Activated CD8-positive, alpha-beta T cell treated with anti-CD3 and anti-CD28 coated beads for 36 hours (primary cell): ENCODE measurements at regions of chr17 and their contacts with region 1.

Region 1: GRCh38 chr17:82351716-82352488 is 7.1 kb upstream of the TEX19 start:
- DNase-seq: peak; percentile 93
- ATAC-seq: peak; percentile 82
- H3K4me3 Mint-ChIP-seq: no peak overlapping the region
- H3K27ac Mint-ChIP-seq: no peak overlapping the region
- H3K4me1 Mint-ChIP-seq: peaks cover 6% of the 10 kb centered on the region
- H3K27me3 Mint-ChIP-seq: peaks cover 8% of the 10 kb centered on the region
- CTCF ChIP-seq: peak; percentile 91

Region 2: GRCh38 chr17:82366749-82367148 is 14.8 kb after region 1 on chr17:
- CTCF ChIA-PET with region 1: interaction called, 10 read pairs
- POLR2A ChIA-PET with region 1: no interaction called
- intact Hi-C with region 1: no loop called
- DNase-seq: no peak
- ATAC-seq: no peak
- H3K4me3 Mint-ChIP-seq: no peak overlapping the region
- H3K27ac Mint-ChIP-seq: no peak overlapping the region
- H3K4me1 Mint-ChIP-seq: peaks cover 9% of the 10 kb centered on the region
- H3K27me3 Mint-ChIP-seq: peaks cover 13% of the 10 kb centered on the region
- CTCF ChIP-seq: no peak

Region 3: GRCh38 chr17:82418001-82418986 is 66.4 kb after region 1 on chr17 and contains the starts of genes HEXD and OGFOD3:
- CTCF ChIA-PET with region 1: interaction called, 14 read pairs
- POLR2A ChIA-PET with region 1: interaction called, 3 read pairs
- intact Hi-C with region 1: loop called (anchors 5 kb)
- DNase-seq: peak; percentile 82
- ATAC-seq: peak; percentile 91
- H3K4me3 Mint-ChIP-seq: peak within 1 kb of the TSS; percentile 78
- H3K27ac Mint-ChIP-seq: peak within 1 kb of the TSS; percentile 57
- H3K4me1 Mint-ChIP-seq: peaks cover 27% of the 10 kb centered on the region
- H3K27me3 Mint-ChIP-seq: no peaks in the 10 kb centered on the region
- CTCF ChIP-seq: no peak
- total RNA-seq, gene HEXD: 21.8 to 21.9 TPM
- total RNA-seq, gene OGFOD3: 22.0 to 25.0 TPM